ENCODE measurements at regions of chr9 and their contacts with region 1.

Region 1: DNA sequence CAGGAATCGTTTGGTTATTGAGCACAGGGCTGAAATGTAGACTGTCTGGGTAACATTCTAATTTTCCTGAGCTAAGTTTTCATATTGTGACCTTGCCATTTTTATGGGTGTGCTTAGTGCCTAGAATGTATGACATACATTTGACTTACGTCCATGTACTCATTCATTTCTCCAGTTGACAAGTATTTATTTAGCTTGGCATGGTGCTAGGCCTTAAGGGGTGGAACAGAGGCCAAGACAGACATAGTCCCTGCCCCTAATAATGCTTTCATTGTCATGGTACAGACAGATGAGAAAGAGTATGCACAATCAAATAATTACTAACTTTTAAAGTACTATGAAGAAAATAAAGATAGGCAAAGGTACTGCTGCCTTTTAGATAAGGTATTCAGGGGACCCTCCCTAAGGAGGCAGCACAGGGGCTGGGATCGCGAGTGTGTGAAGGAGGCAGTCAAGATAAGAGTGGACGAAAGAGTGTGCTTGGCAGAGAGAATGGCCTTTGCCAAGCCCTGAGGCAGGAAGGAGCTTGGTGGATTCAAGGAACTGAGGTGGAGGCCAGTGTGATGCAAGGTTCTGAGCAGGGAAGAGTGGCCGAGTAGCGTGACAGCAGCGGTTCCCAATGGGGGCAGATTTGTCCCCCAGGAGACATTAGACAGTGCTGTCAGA is 127.9 kb downstream of the PIP5K1B start:
- DNase-seq: no peak
- ATAC-seq: peak in 2 of 8 donors; percentile 19 to 51
- H3K4me3 ChIP-seq: no peak overlapping the region
- H3K27ac ChIP-seq: peak overlapping the region in 3 of 10 donors; percentile 11 to 46 (median 14)
- H3K4me1 ChIP-seq: peaks cover 0 to 51% (median 20%) of the 10 kb centered on the region in 9 donors
- H3K27me3 ChIP-seq: no peaks in the 10 kb centered on the region
- CTCF ChIP-seq: no peak

Region 2: GRCh38 chr9:68704814-68705530 is 128.0 kb before region 1 on chr9 and contains the start of gene PIP5K1B:
- intact Hi-C with region 1: loop called in 3 of 10 experiments (anchors 5 to 10 kb)
- DNase-seq: peak; percentile 66 to 76
- ATAC-seq: peak; percentile 82 to 92 (median 86)
- H3K4me3 ChIP-seq: peak within 1 kb of the TSS; percentile 29 to 79 (median 64)
- H3K27ac ChIP-seq: peak within 1 kb of the TSS; percentile 81 to 93 (median 88)
- H3K4me1 ChIP-seq: peaks cover 0 to 32% (median 8%) of the 10 kb centered on the region in 9 donors
- H3K27me3 ChIP-seq: peaks cover 0 to 50% (median 14%) of the 10 kb centered on the region in 7 donors
- CTCF ChIP-seq: peak in 3 of 9 donors; percentile 7 to 36 (median 13)
- total RNA-seq, gene PIP5K1B: 32.2 to 90.8 (median 49.7) TPM

Region 3: GRCh38 chr9:68714416-68715180 is 118.4 kb before region 1 on chr9:
- intact Hi-C with region 1: loop called in 3 of 10 experiments (anchors 5 to 10 kb)
- DNase-seq: no peak
- ATAC-seq: peak in 1 of 8 donors; percentile 33
- H3K4me3 ChIP-seq: no peak overlapping the region
- H3K27ac ChIP-seq: no peak overlapping the region
- H3K4me1 ChIP-seq: peaks cover 0 to 52% (median 13%) of the 10 kb centered on the region in 9 donors
- H3K27me3 ChIP-seq: peaks cover 0 to 3% (median 0%) of the 10 kb centered on the region in 7 donors
- CTCF ChIP-seq: no peak

Region 4: GRCh38 chr9:68793605-68794343 is 39.2 kb before region 1 on chr9:
- intact Hi-C with region 1: loop called in 2 of 10 experiments (anchors 5 to 10 kb)
- DNase-seq: no peak
- ATAC-seq: no peak
- H3K4me3 ChIP-seq: no peak overlapping the region
- H3K27ac ChIP-seq: no peak overlapping the region
- H3K4me1 ChIP-seq: peaks cover 0 to 39% (median 12%) of the 10 kb centered on the region in 9 donors
- H3K27me3 ChIP-seq: no peaks in the 10 kb centered on the region
- CTCF ChIP-seq: no peak

Region 5: GRCh38 chr9:68872026-68872501 is 39.1 kb after region 1 on chr9:
- intact Hi-C with region 1: loop called in 1 of 10 experiments (anchors 5 kb)
- DNase-seq: peak; percentile 48 to 56
- ATAC-seq: peak; percentile 76 to 96 (median 86)
- H3K4me3 ChIP-seq: no peak overlapping the region
- H3K27ac ChIP-seq: peak overlapping the region; percentile 28 to 86 (median 74)
- H3K4me1 ChIP-seq: peaks cover 0 to 50% (median 23%) of the 10 kb centered on the region in 9 donors
- H3K27me3 ChIP-seq: no peaks in the 10 kb centered on the region
- CTCF ChIP-seq: no peak

Measured in heart right ventricle (tissue), 16 donors.